Sciatic nerve (tissue), 2 donors: ENCODE measurements at regions of chr1 and their contacts with region 1.

Region 1: DNA sequence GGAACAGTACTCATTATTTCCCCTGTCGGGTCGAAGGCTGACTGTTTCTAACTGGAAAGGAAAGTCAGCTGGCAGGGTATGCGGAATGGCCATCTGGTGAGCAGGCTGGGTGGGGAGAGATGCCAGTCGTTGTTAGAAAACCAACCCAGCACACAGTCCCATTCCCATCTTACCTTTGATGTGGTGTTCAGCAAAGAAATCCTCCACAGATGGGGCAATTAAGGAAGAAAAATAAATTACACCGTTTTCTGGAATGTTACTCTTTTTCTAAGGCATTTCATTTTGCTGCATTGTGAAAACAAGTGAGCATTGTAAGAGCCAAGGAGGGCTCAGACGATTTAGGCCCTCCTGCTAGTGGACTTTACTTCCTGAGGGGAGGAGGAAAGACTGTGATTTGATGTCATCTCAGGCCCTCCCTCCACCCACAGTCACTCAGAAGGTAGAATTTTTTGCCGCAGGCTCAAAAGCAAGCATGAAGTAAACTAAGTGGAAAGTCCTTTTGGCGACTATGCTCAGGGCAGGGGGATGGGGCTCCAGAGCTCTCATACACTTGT is at the start of gene SLC16A4:
- DNase-seq: no peak
- ATAC-seq: peak; percentile 95
- total RNA-seq, gene SLC16A4: 20.5 TPM

Region 2: DNA sequence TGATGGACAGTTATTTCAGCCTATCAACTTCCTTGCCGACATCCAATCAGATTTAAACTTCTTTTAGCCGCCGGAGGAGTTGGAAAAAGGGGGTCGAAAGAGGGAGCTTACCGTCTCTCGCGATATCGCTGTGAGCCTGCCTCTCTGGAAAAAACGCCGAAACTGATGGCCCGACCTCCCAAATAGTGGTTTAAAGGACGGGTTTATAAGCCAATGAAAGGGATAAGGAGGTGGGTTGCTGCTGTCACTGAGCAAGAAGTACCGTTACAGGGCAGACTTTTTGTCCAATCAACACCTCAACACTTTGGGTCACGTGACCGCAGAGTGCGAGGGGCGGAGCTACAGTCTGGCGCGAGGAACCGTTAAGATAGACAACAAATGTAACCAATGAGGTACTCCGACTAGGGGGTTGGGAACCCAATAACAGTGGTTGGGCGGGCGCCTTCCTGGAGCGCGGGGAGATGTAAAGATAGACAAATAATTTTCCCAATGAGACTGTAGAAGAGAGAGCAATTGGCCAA is 51.8 kb before region 1 on chr1 and contains the start of gene RBM15:
- intact Hi-C with region 1: loop called (anchors 5 kb)
- DNase-seq: peak; percentile 98
- ATAC-seq: peak; percentile 94
- total RNA-seq, gene RBM15: 23.4 TPM